HEK293 (cell line): ENCODE measurements at regions of chr1 and their contacts with region 1.

Region 1: DNA sequence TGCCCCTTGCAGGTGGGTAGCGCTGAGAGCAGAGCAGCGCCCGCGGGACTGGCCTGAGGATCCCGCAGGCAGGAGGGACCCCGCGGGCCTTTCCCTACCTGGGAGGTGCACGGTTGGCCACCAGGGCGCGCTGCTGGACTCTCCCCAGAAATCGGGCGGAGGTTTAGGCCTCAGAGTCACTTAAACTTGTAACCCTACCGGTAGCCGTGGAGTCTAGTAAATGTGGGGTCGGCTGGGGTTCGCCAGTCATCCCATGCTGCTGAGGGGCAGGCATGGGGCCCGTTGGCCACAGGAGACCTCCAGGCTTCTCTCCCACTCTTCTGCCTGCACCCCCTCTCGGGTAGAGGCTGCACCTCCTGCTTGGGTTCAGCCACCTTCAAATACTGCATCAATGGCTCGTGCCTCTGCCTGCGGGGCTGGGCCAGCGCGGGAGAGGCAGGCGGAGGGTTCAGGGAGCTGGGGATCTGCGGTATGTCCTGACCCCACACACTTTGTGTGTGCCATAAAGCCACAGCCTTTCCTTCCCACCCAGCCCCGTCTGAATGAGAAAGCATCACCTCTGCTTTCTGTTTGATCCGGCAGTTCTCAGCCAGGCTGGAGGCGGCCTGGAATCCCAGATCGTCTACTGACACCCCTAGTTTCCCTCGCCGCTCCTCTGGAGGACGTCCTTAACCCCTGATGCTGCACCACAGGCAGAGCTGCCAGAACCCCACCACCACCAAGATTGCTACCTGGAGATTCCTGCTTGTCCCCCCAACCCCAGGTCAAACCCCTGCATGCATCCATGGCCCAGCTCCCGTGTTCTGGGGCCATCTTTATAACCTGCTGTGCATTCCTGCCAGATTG is 12.3 kb upstream of the GSTM4 start:
- H3K4me3 ChIP-seq: no peak overlapping the region
- H3K27ac ChIP-seq: no peak overlapping the region
- H3K4me1 ChIP-seq: no peaks in the 10 kb centered on the region
- CTCF ChIP-seq: peak; percentile 89

Region 2: DNA sequence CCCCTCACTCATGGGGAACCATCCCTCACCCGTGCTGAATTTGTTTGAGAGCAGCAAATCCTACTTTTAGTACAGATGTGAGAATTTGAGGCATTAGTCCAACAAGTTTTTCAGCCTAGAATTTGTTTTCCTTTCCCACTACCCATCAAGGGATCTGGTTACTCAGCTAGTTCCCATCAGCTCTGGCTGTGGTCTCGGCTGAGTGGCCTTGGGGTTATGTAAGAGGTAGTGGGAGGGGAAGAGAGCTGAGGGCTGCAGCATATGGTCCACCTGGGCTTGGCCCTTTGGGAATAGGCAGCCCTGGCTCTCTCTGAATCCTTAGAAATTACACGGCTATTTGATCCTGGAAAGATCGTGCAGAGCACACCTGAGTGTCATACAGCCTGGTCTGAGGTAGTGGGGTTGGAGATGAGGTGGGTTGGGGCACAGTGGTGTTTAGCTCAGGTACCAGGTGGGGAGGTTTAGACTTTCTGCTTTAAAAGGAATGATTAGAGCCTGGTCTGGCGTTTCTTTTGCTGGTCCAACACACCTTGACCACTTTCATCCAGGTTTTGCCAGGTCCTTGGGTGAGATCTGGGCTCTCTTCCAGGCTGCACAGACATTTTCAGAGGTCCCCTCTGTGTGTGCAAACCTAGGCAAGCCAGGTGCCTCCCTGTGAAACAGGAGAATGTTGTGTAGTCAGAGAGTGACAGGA is 16.5 kb after region 1 on chr1:
- CTCF ChIA-PET with region 1: interaction called, 27 read pairs
- POLR2A ChIA-PET with region 1: no interaction called
- H3K4me3 ChIP-seq: no peak overlapping the region
- H3K27ac ChIP-seq: no peak overlapping the region
- H3K4me1 ChIP-seq: no peaks in the 10 kb centered on the region
- CTCF ChIP-seq: no peak

Region 3: DNA sequence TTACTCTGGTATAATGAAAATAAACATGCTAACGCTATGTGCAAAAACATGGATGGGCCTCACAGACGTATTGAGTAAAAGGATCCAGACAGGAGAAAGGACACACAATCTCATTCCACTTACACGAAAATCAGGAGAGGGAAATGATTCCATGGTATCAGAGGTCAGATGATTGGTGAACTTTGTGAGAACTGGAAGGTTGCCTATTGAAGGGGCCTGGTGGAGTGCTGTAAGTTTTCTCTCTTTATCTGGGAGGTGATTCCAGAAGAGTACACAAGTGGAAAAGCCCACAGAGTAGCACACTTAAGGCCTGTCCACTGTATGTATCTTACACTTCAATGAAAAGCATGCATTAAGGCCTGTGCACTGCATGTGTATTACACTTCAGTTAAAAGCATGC is 33.9 kb after region 1 on chr1:
- CTCF ChIA-PET with region 1: no interaction called
- POLR2A ChIA-PET with region 1: no interaction called
- H3K4me3 ChIP-seq: no peak overlapping the region
- H3K27ac ChIP-seq: no peak overlapping the region
- H3K4me1 ChIP-seq: no peaks in the 10 kb centered on the region
- CTCF ChIP-seq: no peak

Region 4: DNA sequence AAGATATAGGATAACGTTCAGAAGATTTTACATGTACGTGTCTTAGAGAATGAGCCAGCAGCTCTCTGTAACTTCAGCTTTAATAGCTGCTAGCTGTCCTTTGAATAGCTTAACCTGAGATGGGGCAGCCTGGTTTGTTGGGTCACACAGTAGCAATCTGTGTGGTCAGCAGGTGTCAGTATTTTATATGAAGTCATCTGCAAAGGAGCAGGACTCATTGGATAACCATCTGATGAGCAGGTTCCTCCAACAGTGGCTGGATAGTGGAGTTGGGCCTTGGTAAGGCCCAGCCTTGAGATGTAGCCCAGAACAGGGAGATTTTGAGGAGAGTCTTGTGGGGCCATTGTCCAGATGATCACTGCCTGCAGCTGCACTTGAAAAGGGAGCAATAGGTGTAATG is 74.9 kb after region 1 on chr1:
- CTCF ChIA-PET with region 1: interaction called, 12 read pairs
- POLR2A ChIA-PET with region 1: no interaction called
- H3K4me3 ChIP-seq: no peak overlapping the region
- H3K27ac ChIP-seq: no peak overlapping the region
- H3K4me1 ChIP-seq: no peaks in the 10 kb centered on the region
- CTCF ChIP-seq: peak; percentile 32

Region 5: DNA sequence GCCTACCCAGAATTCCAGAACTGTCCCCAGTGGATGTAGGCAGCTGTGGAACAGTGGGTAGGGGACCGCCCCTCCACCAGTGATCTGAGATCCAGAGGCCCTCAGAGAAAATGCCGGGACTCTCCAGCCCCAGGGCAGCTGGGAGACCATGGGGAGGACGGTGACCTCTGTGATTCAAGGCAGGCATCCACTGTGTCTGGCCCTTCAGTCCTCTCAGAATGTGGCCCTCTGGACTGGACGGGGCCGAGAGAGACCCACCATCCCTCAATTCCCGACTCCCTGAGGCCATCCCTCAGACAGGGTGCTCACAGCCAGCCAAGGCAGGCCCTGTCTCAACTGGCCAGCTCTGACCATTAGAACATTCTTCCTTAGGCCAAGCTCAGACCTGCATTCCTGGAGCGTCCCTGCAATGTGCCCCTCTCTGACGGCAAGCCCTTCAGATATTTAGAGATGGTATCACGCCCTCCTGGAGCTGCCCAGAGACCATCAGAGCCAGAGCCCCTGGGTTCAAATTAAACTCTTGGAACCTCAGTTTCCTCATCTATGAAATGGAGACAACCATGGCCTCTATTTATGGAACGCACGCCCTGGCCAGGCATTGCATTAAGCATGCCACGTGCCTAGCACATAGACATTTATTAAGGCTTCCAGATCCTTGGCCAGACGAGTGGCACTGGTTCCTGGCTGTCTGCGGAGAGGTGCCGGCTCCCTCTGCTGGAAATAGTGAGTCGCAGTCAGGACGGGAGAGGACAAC is 129.7 kb after region 1 on chr1:
- CTCF ChIA-PET with region 1: interaction called, 345 read pairs
- POLR2A ChIA-PET with region 1: interaction called, 6 read pairs
- H3K4me3 ChIP-seq: no peak overlapping the region
- H3K27ac ChIP-seq: no peak overlapping the region
- H3K4me1 ChIP-seq: no peaks in the 10 kb centered on the region
- CTCF ChIP-seq: peak; percentile 81; the same call in 1 of the 2 replicates